ENCODE measurements at regions of chr10 and their contacts with region 1.

Region 1: GRCh38 chr10:71974489-71975021 is 10.4 kb downstream of the CHST3 start:
- DNase-seq: peak in 1 of 2 donors; percentile 86
- ATAC-seq: peak; percentile 16 to 42
- H3K4me3 ChIP-seq: no peak overlapping the region
- H3K27ac ChIP-seq: peak overlapping the region; percentile 91 to 97 (median 92)
- H3K4me1 ChIP-seq: peaks cover 96 to 98% of the 10 kb centered on the region in 2 donors
- H3K27me3 ChIP-seq: no peaks in the 10 kb centered on the region
- CTCF ChIP-seq: no peak
- POLR2A ChIP-seq: no peak

Region 2: GRCh38 chr10:71868192-71868697 is 106.3 kb before region 1 on chr10:
- in situ Hi-C with region 1: no loop called
- intact Hi-C with region 1: no loop called
- DNase-seq: peak; percentile 90 to 92
- ATAC-seq: peak; percentile 82 to 87
- H3K4me3 ChIP-seq: no peak overlapping the region
- H3K27ac ChIP-seq: peak overlapping the region; percentile 71 to 88 (median 82)
- H3K4me1 ChIP-seq: peaks cover 6 to 19% of the 10 kb centered on the region in 2 donors
- H3K27me3 ChIP-seq: no peaks in the 10 kb centered on the region
- CTCF ChIP-seq: peak in 1 of 5 experiments; percentile 40
- POLR2A ChIP-seq: peak in 1 of 2 donors; percentile 53

Region 3: DNA sequence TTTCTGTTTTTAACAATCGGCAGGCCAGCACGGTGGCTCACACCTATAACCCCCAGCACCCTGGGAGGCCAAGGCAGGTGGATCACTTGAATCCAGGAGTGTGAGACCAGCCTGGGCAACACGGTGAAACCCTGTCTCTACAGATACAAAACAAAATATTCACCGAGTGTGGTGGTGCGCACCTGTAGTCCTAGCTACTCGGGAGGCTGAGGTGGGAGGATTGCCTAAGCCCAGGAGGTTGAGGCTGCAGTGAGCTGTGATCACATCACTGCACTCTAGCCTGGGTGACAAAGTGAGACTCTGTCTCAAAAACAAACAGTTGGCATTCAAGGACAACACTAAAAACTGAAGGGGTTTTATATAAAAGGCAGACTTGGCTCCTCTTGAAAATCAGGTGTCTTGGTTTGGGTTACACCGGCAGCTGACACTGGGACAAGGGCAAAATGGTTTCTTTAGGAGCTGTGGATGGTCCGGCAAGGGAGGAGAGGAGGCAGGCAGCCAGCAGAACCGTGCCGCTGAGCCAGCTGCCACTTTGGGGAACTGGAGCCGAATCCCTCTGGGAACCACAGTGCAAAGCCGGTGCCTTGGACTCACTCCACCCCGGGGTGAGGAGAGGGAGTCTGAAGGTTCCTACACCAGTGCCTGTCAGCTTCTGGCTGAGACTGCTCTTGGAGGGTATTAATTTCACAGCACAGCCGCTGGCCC is 42.2 kb after region 1 on chr10:
- in situ Hi-C with region 1: no loop called
- intact Hi-C with region 1: loop called (anchors 2 kb)
- DNase-seq: peak; percentile 65 to 96
- ATAC-seq: peak; percentile 77 to 95
- H3K4me3 ChIP-seq: no peak overlapping the region
- H3K27ac ChIP-seq: peak overlapping the region; percentile 76 to 86 (median 80)
- H3K4me1 ChIP-seq: peaks cover 55% of the 10 kb centered on the region in 2 donors
- H3K27me3 ChIP-seq: no peaks in the 10 kb centered on the region
- CTCF ChIP-seq: no peak
- POLR2A ChIP-seq: no peak

Region 4: GRCh38 chr10:72030762-72031543 is 56.4 kb after region 1 on chr10:
- in situ Hi-C with region 1: no loop called
- intact Hi-C with region 1: loop called (anchors 2 kb)
- DNase-seq: peak; percentile 72 to 81
- ATAC-seq: peak; percentile 72 to 80
- H3K4me3 ChIP-seq: no peak overlapping the region
- H3K27ac ChIP-seq: peak overlapping the region; percentile 57 to 76 (median 72)
- H3K4me1 ChIP-seq: peaks cover 25 to 39% of the 10 kb centered on the region in 2 donors
- H3K27me3 ChIP-seq: no peaks in the 10 kb centered on the region
- CTCF ChIP-seq: no peak
- POLR2A ChIP-seq: no peak

Region 5: GRCh38 chr10:72215652-72216549 is 241.3 kb after region 1 on chr10 and contains the starts of genes ANAPC16 and ASCC1:
- in situ Hi-C with region 1: no loop called
- intact Hi-C with region 1: no loop called
- DNase-seq: peak; percentile 83 to 89
- ATAC-seq: peak; percentile 92 to 94
- H3K4me3 ChIP-seq: peak within 1 kb of the TSS; percentile 72 to 91 (median 81)
- H3K27ac ChIP-seq: peak within 1 kb of the TSS; percentile 94 to 99 (median 98)
- H3K4me1 ChIP-seq: peaks cover 55 to 56% of the 10 kb centered on the region in 2 donors
- H3K27me3 ChIP-seq: no peaks in the 10 kb centered on the region
- CTCF ChIP-seq: no peak
- POLR2A ChIP-seq: peak; percentile 91 to 96
- total RNA-seq, gene ANAPC16: 70.9 to 168 (median 105) TPM
- total RNA-seq, gene ASCC1: 26.1 to 31.1 (median 29.6) TPM